Activated CD4-positive, alpha-beta T cell treated with anti-CD3 and anti-CD28 coated beads for 36 hours (primary cell): ENCODE measurements at regions of chr1 and their contacts with region 1.

Region 1: GRCh38 chr1:26695356-26696118 is at the start of gene ARID1A:
- DNase-seq: peak; percentile 97
- ATAC-seq: peak; percentile 55
- H3K4me3 Mint-ChIP-seq: peak within 1 kb of the TSS; percentile 81
- H3K27ac Mint-ChIP-seq: peak within 1 kb of the TSS; percentile 91
- H3K4me1 Mint-ChIP-seq: peaks cover 30% of the 10 kb centered on the region
- H3K27me3 Mint-ChIP-seq: no peaks in the 10 kb centered on the region
- total RNA-seq, gene ARID1A: 73.1 to 112 TPM

Region 2: DNA sequence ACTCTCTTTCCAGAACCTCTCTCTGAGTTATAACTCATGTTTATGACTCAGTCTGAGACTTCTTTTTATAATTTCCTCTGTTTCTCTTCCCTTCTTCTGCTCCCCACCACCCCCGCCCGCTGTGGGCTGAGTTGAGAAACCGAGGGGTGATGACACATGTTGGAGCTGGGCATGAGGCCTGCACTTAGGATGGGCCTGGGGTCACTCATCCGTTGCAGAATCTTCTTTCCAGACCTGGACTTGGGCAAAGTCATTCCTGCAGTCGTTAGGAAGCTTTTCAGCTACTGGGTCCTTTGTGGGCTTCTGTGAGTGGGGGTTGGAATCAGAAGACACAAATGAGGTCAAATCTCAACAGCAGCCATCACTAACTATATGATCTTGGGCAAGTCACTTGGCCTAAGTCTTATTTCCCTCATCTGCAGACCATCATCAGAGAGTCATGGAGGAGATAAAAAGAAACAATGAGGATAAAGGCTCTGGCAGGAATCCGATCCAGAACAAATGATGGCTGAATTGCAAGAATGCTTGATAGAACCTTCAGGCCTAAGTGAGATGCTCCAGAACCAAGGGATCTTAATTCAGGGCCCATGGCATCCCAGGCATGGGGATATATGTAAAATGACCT is 112.6 kb before region 1 on chr1:
- CTCF ChIA-PET with region 1: interaction called, 5 read pairs
- POLR2A ChIA-PET with region 1: interaction called, 6 read pairs
- intact Hi-C with region 1: loop called in 1 of 2 experiments (anchors 2 kb)
- DNase-seq: peak; percentile 93
- ATAC-seq: peak; percentile 55
- H3K4me3 Mint-ChIP-seq: peak overlapping the region; percentile 35
- H3K27ac Mint-ChIP-seq: peak overlapping the region; percentile 95
- H3K4me1 Mint-ChIP-seq: peaks cover 54% of the 10 kb centered on the region
- H3K27me3 Mint-ChIP-seq: no peaks in the 10 kb centered on the region

Region 3: DNA sequence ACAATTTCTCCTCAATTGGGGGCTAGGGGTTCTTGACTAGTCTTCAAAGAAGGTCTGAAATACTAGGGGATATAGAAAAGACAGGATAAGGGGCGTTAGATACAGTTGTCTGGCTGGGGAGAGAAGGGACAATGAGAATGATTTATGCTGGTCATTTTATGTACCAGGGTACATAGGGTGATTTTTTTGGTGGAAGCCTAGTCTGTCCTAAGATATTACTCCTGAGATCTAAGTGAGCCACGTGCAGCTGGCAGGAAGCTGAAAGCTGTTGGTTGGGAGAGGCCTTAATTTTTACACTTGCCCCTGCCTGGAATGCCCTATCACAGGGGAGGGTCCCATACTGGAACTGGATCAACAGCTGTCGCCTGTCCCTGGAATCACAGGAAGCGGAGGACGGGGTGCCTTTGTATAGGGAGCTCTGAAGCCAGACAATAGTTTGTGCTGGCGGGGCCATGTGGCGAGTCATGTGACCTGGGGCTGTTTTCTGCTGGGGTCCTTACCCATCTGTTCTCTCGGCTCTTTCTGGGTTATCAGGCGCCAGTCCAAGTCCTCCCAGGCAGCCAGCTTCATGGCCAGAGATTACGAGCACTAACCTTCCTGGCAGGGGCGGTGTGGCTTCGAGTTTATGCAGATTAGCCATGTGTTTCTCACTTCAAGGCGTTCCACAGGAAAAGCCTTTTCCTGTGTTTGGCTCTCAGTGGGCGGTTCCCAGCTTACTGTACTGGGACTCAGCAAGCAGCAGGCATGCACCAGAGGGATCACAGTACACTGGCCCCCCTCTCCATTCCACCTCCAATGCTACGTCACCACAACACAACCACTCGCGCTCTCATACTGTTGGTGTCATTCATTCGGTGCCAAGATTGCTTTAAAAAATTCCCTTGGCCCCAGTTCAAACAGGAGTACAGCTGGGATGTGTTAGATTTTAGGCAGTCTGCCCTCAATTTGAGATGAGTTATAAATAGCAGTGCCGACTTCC is 27.8 kb after region 1 on chr1:
- CTCF ChIA-PET with region 1: interaction called, 7 read pairs
- POLR2A ChIA-PET with region 1: interaction called, 10 read pairs
- intact Hi-C with region 1: loop called in 1 of 2 experiments (anchors 1 kb)
- DNase-seq: peak; percentile 54
- ATAC-seq: peak; percentile 50
- H3K4me3 Mint-ChIP-seq: peak overlapping the region; percentile 34
- H3K27ac Mint-ChIP-seq: peak overlapping the region; percentile 82
- H3K4me1 Mint-ChIP-seq: peaks cover 95% of the 10 kb centered on the region
- H3K27me3 Mint-ChIP-seq: no peaks in the 10 kb centered on the region

Region 4: GRCh38 chr1:26826261-26827105 is 130.9 kb after region 1 on chr1 and contains the start of gene ZDHHC18:
- CTCF ChIA-PET with region 1: no interaction called
- POLR2A ChIA-PET with region 1: no interaction called
- intact Hi-C with region 1: loop called in 1 of 2 experiments (anchors 1 kb)
- DNase-seq: peak; percentile 84
- ATAC-seq: peak; percentile 81
- H3K4me3 Mint-ChIP-seq: peak within 1 kb of the TSS; percentile 94
- H3K27ac Mint-ChIP-seq: peak within 1 kb of the TSS; percentile 93
- H3K4me1 Mint-ChIP-seq: peaks cover 52% of the 10 kb centered on the region
- H3K27me3 Mint-ChIP-seq: no peaks in the 10 kb centered on the region
- total RNA-seq, gene ZDHHC18: 51.6 to 66.0 TPM

Region 5: DNA sequence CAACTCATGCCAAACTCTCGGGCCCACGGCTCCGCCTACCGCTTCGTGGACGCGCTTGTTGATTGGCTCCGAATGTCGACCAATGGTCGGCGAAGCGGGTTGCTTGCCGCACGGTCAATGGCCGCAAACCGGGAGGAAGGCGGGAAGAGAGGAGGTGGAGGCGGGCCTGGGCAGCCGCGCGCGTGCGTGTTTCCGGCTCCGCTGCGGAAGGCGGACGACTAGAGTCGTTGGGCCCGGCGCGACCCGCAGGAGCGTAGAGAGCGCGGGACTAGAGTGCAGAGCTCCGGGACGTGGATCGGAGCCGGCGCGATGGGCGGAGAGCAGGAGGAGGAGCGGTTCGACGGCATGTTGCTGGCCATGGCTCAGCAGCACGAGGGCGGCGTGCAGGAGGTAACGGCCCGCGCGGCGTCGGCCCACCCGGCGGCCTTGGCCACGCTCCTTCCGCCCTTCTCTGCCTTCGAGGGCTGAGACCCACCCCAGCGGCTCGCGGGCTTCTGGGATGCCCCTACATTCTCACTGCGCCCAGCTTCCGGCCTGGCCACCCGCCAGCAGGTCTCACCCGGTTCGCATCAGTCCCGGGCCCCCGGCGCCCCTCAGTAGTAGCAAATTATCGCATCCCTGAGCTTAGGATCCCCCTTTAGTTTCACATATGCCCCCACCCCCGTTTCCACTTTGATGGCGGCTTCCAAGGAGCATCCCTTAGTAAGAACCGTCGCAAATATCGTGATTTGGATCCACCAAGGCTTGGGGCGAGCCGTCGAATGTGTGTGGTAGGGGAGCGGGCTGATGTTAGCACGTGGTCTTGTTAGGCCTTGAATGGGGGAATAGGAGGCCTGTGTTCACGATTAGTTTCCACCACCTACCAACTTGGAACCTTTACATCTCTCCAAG is 226.2 kb after region 1 on chr1 and contains the start of gene NUDC:
- CTCF ChIA-PET with region 1: no interaction called
- POLR2A ChIA-PET with region 1: no interaction called
- intact Hi-C with region 1: loop called in 1 of 2 experiments (anchors 1 kb)
- DNase-seq: peak; percentile 98
- ATAC-seq: peak; percentile 98
- H3K4me3 Mint-ChIP-seq: peak within 1 kb of the TSS; percentile 82
- H3K27ac Mint-ChIP-seq: peak within 1 kb of the TSS; percentile 90
- H3K4me1 Mint-ChIP-seq: peaks cover 38% of the 10 kb centered on the region
- H3K27me3 Mint-ChIP-seq: no peaks in the 10 kb centered on the region
- total RNA-seq, gene NUDC: 95.9 to 101 TPM